ENCODE measurements at regions of chr17 and their contacts with region 1.

Region 1: DNA sequence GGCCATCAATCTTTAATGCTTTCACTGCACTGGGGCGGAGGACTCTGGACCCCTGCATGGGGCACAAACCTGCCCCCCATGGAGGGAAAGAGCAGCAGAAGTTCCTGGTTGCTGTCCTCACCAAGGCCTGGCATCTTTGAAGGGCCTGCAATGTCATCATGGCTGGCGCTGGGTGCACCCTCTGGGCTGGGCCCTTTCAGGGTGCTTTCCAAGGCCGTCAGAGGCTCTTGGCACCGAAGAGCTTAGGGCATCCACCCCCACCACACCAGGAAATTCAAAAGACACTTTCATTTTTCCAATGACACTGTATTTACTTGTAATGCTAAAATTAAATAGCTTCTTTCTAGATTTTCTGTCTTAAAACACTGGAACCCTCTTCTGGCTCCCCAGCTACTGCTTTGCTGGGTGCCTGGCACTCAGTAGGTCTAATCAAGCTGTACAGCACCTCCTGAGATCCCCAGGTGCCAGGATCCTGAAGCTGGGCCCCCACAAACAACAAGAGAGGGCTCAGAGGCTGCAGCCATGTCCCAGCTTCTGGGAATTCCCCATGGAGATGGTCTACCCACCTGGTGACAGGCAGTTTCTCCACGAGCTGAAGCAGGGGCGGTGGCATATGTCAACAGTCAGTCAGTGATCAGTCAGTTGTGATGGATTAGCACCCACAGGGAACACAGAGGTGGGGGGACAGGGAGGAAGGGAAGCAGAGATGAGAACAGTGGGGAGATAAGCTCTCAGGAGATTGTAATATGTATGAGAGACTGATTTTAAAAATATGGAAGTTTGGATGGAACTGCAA is 2.1 kb upstream of the CACNG1 start:
- DNase-seq: no peak
- ATAC-seq: no peak
- H3K4me3 ChIP-seq: no peak overlapping the region
- H3K27ac ChIP-seq: peak overlapping the region; percentile 97 to 98 (median 98)
- H3K4me1 ChIP-seq: peaks cover 19 to 24% of the 10 kb centered on the region in 2 donors
- H3K27me3 ChIP-seq: no peaks in the 10 kb centered on the region
- CTCF ChIP-seq: no peak
- POLR2A ChIP-seq: no peak

Region 2: DNA sequence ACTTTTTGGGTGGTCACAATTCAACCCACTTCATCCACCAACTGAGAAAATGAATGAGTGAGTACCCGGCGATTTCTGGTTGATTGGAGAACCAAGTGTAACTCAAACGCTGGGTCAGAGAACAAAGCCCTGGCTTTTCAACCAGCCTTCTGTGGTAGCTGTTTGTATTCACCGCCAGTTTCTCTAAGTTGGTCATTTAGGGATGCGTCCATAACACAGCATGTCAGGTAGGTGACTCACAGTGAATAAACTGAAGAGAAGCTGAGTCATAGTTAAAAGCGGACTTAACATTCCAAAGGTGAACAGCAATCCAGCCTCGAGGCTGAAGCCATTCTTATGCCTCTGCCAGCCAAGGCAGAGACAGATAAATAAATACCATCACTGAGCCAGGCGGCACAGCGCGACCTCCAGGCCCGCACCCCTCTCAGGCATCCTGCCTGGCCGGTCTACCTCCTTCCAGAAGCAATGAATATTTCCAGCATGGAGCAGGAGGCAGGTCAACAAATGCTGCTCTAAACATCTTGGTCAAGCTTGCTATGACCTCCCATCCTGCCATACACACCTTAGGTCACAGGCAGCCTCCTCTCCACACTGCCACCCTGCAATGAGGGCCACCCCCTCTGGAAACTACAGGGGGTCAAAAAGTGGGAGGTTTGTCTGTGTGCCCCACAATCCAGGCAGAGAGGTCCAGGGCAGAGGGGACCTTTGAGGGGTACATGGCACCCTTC is 90.2 kb before region 1 on chr17:
- in situ Hi-C with region 1: no loop called
- intact Hi-C with region 1: loop called (anchors 5 kb)
- DNase-seq: peak; percentile 32 to 66
- ATAC-seq: peak; percentile 99 to 100
- H3K4me3 ChIP-seq: no peak overlapping the region
- H3K27ac ChIP-seq: peak overlapping the region; percentile 63 to 81 (median 74)
- H3K4me1 ChIP-seq: peaks cover 7 to 14% of the 10 kb centered on the region in 2 donors
- H3K27me3 ChIP-seq: no peaks in the 10 kb centered on the region
- CTCF ChIP-seq: no peak
- POLR2A ChIP-seq: no peak

Region 3: GRCh38 chr17:67095803-67096202 is 53.5 kb after region 1 on chr17:
- in situ Hi-C with region 1: loop called in 1 of 4 experiments (anchors 10 kb)
- intact Hi-C with region 1: loop called (anchors 5 kb)
- DNase-seq: no peak
- ATAC-seq: no peak
- H3K4me3 ChIP-seq: no peak overlapping the region
- H3K27ac ChIP-seq: peak overlapping the region in 3 of 4 donors; percentile 37 to 67 (median 64)
- H3K4me1 ChIP-seq: peaks cover 41 to 71% of the 10 kb centered on the region in 2 donors
- H3K27me3 ChIP-seq: no peaks in the 10 kb centered on the region
- CTCF ChIP-seq: no peak
- POLR2A ChIP-seq: no peak

Region 4: GRCh38 chr17:67245073-67245755 is 202.9 kb after region 1 on chr17 and contains the start of gene HELZ:
- in situ Hi-C with region 1: no loop called
- intact Hi-C with region 1: loop called (anchors 10 kb)
- DNase-seq: peak; percentile 58 to 65
- ATAC-seq: peak; percentile 87 to 92
- H3K4me3 ChIP-seq: peak within 1 kb of the TSS; percentile 78 to 100 (median 88)
- H3K27ac ChIP-seq: peak within 1 kb of the TSS; percentile 91 to 98 (median 96)
- H3K4me1 ChIP-seq: peaks cover 34 to 42% of the 10 kb centered on the region in 2 donors
- H3K27me3 ChIP-seq: no peaks in the 10 kb centered on the region
- CTCF ChIP-seq: no peak
- POLR2A ChIP-seq: peak; percentile 39 to 53
- total RNA-seq, gene HELZ: 21.0 to 47.0 (median 38.9) TPM

Region 5: GRCh38 chr17:68512247-68512982 is 1470.1 kb after region 1 on chr17 and contains the start of gene PRKAR1A:
- in situ Hi-C with region 1: no loop called
- intact Hi-C with region 1: loop called (anchors 10 kb)
- DNase-seq: peak; percentile 92 to 94
- ATAC-seq: peak; percentile 73 to 81
- H3K4me3 ChIP-seq: peak within 1 kb of the TSS; percentile 78 to 89 (median 84)
- H3K27ac ChIP-seq: peak within 1 kb of the TSS; percentile 94 to 99 (median 96)
- H3K4me1 ChIP-seq: peaks cover 48 to 55% of the 10 kb centered on the region in 2 donors
- H3K27me3 ChIP-seq: no peaks in the 10 kb centered on the region
- CTCF ChIP-seq: peak in 2 of 5 experiments; percentile 17 to 18
- POLR2A ChIP-seq: peak; percentile 96 to 97
- total RNA-seq, gene PRKAR1A: 271 to 656 (median 557) TPM